ENCODE measurements at regions of chr2 and their contacts with region 1.

Region 1: GRCh38 chr2:99399795-99400194 is 62.6 kb downstream of the EIF5B start:
- DNase-seq: no peak

Region 2: GRCh38 chr2:99297994-99298393 is 101.8 kb before region 1 on chr2:
- intact Hi-C with region 1: no loop called
- DNase-seq: no peak

Region 3: GRCh38 chr2:99448556-99448955 is 48.8 kb after region 1 on chr2:
- intact Hi-C with region 1: loop called (anchors 1 kb)
- DNase-seq: no peak